MCF 10A (cell line): ENCODE measurements at regions of chr14 and their contacts with region 1.

Region 1: GRCh38 chr14:92589213-92589852 is 75.8 kb downstream of the RIN3 start:
- DNase-seq: peak; percentile 58
- H3K4me3 Mint-ChIP-seq: no peak overlapping the region
- H3K27ac Mint-ChIP-seq: no peak overlapping the region
- H3K4me1 Mint-ChIP-seq: no peaks in the 10 kb centered on the region
- H3K27me3 Mint-ChIP-seq: no peaks in the 10 kb centered on the region
- CTCF ChIP-seq: peak; percentile 43

Region 2: DNA sequence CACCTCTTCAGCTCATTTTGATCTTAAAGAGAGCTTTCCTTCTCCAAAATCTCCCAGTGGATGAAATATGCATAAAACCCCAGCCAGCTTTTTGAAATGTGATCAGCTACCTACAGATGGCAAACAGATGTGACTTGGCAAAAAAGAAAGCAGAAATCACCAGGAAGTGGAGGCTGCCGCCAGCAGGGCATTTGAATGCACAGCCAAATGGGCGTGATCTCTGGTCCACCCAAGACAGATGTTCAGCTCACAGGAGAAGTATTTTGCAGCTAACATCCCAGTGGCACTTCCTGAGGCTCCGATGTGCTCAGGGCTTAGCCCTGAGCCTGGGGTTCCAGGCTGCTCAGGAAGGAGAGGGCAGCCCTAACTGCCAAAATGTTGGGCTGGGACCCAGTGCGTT is 80.8 kb after region 1 on chr14:
- CTCF ChIA-PET with region 1: interaction called, 6 read pairs
- POLR2A ChIA-PET with region 1: no interaction called
- intact Hi-C with region 1: loop called (anchors 1 kb)
- DNase-seq: peak; percentile 56
- H3K4me3 Mint-ChIP-seq: no peak overlapping the region
- H3K27ac Mint-ChIP-seq: no peak overlapping the region
- H3K4me1 Mint-ChIP-seq: peaks cover 5% of the 10 kb centered on the region
- H3K27me3 Mint-ChIP-seq: no peaks in the 10 kb centered on the region
- CTCF ChIP-seq: no peak

Region 3: GRCh38 chr14:92680781-92681650 is 91.7 kb after region 1 on chr14:
- CTCF ChIA-PET with region 1: interaction called, 7 read pairs
- POLR2A ChIA-PET with region 1: no interaction called
- intact Hi-C with region 1: loop called (anchors 1 kb)
- DNase-seq: peak; percentile 77
- H3K4me3 Mint-ChIP-seq: no peak overlapping the region
- H3K27ac Mint-ChIP-seq: no peak overlapping the region
- H3K4me1 Mint-ChIP-seq: peaks cover 5% of the 10 kb centered on the region
- H3K27me3 Mint-ChIP-seq: no peaks in the 10 kb centered on the region
- CTCF ChIP-seq: peak; percentile 95

Region 4: GRCh38 chr14:92719890-92720323 is 130.6 kb after region 1 on chr14:
- CTCF ChIA-PET with region 1: no interaction called
- POLR2A ChIA-PET with region 1: no interaction called
- intact Hi-C with region 1: no loop called
- DNase-seq: no peak
- H3K4me3 Mint-ChIP-seq: no peak overlapping the region
- H3K27ac Mint-ChIP-seq: no peak overlapping the region
- H3K4me1 Mint-ChIP-seq: no peaks in the 10 kb centered on the region
- H3K27me3 Mint-ChIP-seq: no peaks in the 10 kb centered on the region
- CTCF ChIP-seq: no peak